ENCODE measurements at regions of chr5 and their contacts with region 1.

Region 1: GRCh38 chr5:96934708-96935558 is 947 bp upstream of the LNPEP start:
- DNase-seq: peak; percentile 82 to 96 (median 92)
- H3K4me3 ChIP-seq: peak overlapping the region; percentile 63 to 96 (median 86)
- H3K27ac ChIP-seq: peak overlapping the region; percentile 95 to 100 (median 99)
- H3K27me3 ChIP-seq: no peaks in the 10 kb centered on the region
- CTCF ChIP-seq: peak in 18 of 56 donors; percentile 3 to 40 (median 17)

Region 2: DNA sequence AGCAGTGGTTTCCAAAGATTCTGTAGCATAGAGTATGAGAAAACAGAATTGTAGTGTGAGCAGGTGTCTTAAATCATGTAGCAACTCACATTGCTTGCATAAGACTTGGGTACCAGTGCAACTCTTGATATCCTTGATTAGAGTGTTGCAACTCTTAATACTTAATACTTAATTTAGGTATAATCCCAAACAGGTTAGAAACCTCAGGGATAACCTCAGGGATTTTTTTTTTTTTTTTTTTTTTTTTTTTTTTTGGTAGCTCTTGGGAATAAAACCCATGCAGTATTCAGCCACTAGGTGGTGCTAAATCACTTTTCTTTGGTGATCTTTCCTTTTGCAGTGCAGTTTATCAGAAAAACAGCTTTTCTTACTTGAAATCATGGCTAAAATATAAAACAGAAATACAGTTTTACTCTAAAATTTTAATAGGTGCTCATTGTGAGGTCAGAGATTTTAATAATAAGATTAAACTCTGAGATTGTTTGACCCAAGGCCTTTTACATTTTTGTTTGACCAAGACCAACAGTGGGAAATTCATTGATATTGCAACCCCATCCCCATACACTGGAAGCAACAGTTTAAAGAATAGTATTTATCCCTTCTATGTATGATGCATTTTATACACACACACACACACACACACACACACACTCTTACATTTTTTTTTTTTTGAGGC is 182.5 kb before region 1 on chr5:
- intact Hi-C with region 1: loop called in 1 of 2 experiments (anchors 10 kb)
- DNase-seq: peak in 1 of 10 donors; percentile 39
- H3K4me3 ChIP-seq: no peak overlapping the region
- H3K27ac ChIP-seq: peak overlapping the region in 30 of 59 donors; percentile 9 to 72 (median 46)
- H3K27me3 ChIP-seq: no peaks in the 10 kb centered on the region
- CTCF ChIP-seq: peak; percentile 61 to 93 (median 78)

Region 3: GRCh38 chr5:96807075-96807654 is 127.8 kb before region 1 on chr5:
- intact Hi-C with region 1: loop called (anchors 1 kb)
- DNase-seq: peak; percentile 51 to 87 (median 72)
- H3K4me3 ChIP-seq: peak overlapping the region; percentile 50 to 96 (median 84)
- H3K27ac ChIP-seq: peak overlapping the region; percentile 93 to 100 (median 99)
- H3K27me3 ChIP-seq: no peaks in the 10 kb centered on the region
- CTCF ChIP-seq: peak in 17 of 56 donors; percentile 8 to 40 (median 19)

Region 4: GRCh38 chr5:96868603-96869371 is 66.1 kb before region 1 on chr5:
- intact Hi-C with region 1: loop called in 1 of 2 experiments (anchors 2 kb)
- DNase-seq: peak in 1 of 10 donors; percentile 17
- H3K4me3 ChIP-seq: peak overlapping the region in 1 of 59 donors; percentile 9
- H3K27ac ChIP-seq: no peak overlapping the region
- H3K27me3 ChIP-seq: no peaks in the 10 kb centered on the region
- CTCF ChIP-seq: peak; percentile 50 to 95 (median 87)

Region 5: DNA sequence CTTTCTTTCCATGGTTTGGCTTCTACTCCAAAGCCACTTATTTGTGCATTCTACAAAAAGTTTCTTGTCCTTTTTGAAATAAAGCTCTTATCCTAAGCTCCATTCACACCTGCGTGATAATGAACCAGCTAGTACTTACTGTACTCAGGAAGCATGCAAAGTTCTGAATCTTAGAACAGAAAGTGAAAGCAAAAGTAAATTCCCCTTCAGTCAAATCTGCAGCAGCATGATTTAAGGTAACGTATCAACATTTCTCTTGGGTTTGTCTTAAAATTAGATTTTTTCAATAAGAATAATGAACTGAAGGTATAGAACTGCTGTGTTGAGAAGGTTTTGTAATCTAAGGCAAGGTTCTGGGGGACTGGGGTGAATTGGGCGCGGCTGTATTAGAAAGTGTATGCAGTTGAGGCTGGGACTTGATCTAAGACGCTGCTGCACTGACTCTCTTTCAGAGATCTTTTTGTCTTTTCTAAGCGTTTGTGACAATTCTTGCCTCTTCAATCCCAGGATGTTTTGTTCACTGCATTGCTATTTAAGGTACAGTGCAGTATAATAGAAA is 58.6 kb before region 1 on chr5 and contains the start of gene ERAP2:
- intact Hi-C with region 1: loop called (anchors 2 kb)
- DNase-seq: no peak
- H3K4me3 ChIP-seq: peak within 1 kb of the TSS; percentile 47 to 89 (median 68)
- H3K27ac ChIP-seq: peak within 1 kb of the TSS in 57 of 59 donors; percentile 26 to 89 (median 72)
- H3K27me3 ChIP-seq: no peaks in the 10 kb centered on the region
- CTCF ChIP-seq: peak in 4 of 56 donors; percentile 4 to 28 (median 8)
- total RNA-seq, gene ERAP2: 0.80 to 12.9 (median 4.4) TPM

Region 6: GRCh38 chr5:96984506-96985192 is 49.7 kb after region 1 on chr5:
- intact Hi-C with region 1: no loop called
- DNase-seq: no peak
- H3K4me3 ChIP-seq: no peak overlapping the region
- H3K27ac ChIP-seq: no peak overlapping the region
- H3K27me3 ChIP-seq: no peaks in the 10 kb centered on the region
- CTCF ChIP-seq: no peak

Region 7: DNA sequence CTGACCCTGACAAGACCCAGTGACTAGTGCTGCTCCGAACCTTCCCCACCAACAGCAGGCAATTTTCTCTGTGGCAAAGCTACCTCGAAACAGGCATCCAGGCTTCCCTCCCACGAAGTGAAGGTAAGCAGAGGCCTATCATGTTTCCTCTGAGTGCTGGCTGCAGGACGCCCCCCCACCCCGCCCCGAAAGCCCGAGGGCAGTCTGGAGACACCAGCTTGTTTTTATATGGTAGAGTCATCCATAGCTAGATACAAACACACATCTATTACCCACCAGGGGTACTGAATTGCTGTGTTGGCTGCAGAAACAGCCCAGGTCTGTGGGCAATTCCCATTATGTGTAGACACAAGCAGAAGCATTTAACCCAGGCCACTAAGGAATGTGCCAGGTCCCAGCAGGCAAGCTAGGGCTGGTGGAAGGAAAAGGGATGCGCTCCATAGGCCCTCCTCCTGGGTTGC is 167.1 kb after region 1 on chr5:
- intact Hi-C with region 1: loop called in 1 of 2 experiments (anchors 5 kb)
- DNase-seq: no peak
- H3K4me3 ChIP-seq: peak overlapping the region in 18 of 59 donors; percentile 4 to 56 (median 26)
- H3K27ac ChIP-seq: peak overlapping the region in 58 of 59 donors; percentile 31 to 97 (median 89)
- H3K27me3 ChIP-seq: no peaks in the 10 kb centered on the region
- CTCF ChIP-seq: no peak

Region 8: DNA sequence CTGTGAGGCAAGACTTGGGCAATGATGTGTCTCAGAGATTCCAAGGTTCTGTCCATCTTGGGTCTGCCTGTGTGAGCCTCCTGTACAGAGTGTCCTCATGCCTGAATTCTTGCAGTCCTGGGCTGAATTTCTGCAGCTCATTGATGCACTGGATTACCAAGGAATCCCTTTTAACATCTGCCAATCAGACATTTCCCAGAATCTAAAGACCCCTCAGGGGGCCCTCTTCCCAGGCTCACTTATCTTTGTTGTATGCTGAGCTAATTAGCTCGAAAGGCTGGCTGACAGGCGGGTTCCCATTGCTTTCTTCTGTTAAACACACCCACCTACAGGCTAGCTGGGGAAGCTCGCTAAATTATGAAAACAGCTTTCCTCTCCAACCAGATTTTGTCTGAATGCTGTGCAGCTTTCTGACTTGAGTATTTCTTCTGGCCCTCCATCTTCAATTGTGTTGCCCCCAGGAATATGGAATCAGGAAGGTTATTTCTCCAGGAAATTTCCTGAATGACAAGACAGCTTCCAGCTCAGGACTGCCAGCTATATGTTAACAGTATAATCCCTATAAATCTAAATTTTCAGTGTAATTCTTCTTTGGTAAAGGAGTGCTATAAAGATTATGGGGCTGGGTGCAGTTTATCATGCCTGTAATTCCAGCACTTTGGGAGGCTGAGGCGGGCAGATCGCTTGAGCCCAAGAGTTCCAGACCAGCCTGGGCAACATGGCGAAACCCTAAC is 207.8 kb after region 1 on chr5 and contains the start of gene LIX1:
- intact Hi-C with region 1: loop called in 1 of 2 experiments (anchors 5 kb)
- DNase-seq: peak; percentile 11 to 80 (median 58)
- H3K4me3 ChIP-seq: peak within 1 kb of the TSS in 56 of 59 donors; percentile 1 to 62 (median 38)
- H3K27ac ChIP-seq: peak within 1 kb of the TSS in 17 of 59 donors; percentile 7 to 52 (median 25)
- H3K27me3 ChIP-seq: peaks cover 0 to 3% (median 0%) of the 10 kb centered on the region in 45 donors
- CTCF ChIP-seq: peak in 55 of 56 donors; percentile 34 to 85 (median 67)
- total RNA-seq, gene LIX1: 4.5 to 44.2 (median 17.9) TPM

Measured in dorsolateral prefrontal cortex (tissue), 120 donors.